ENCODE measurements at regions of chr5 and their contacts with region 1.

Region 1: GRCh38 chr5:37412515-37413277 is 33.6 kb downstream of the WDR70 start:
- DNase-seq: peak; percentile 74
- ATAC-seq: peak; percentile 96; the same call in 1 of the 2 replicates
- H3K4me3 ChIP-seq: no peak overlapping the region
- H3K27ac ChIP-seq: no peak overlapping the region
- H3K4me1 ChIP-seq: no peaks in the 10 kb centered on the region
- H3K27me3 ChIP-seq: no peaks in the 10 kb centered on the region
- CTCF ChIP-seq: peak; percentile 94

Region 2: GRCh38 chr5:37400501-37400900 is 12.2 kb before region 1 on chr5:
- CTCF ChIA-PET with region 1: interaction called, 4 read pairs
- POLR2A ChIA-PET with region 1: interaction called, 15 read pairs
- in situ Hi-C with region 1: no loop called
- intact Hi-C with region 1: no loop called
- DNase-seq: no peak
- ATAC-seq: peak; percentile 51; the same call in 1 of the 2 replicates
- H3K4me3 ChIP-seq: no peak overlapping the region
- H3K27ac ChIP-seq: no peak overlapping the region
- H3K4me1 ChIP-seq: no peaks in the 10 kb centered on the region
- H3K27me3 ChIP-seq: no peaks in the 10 kb centered on the region
- CTCF ChIP-seq: no peak

Region 3: DNA sequence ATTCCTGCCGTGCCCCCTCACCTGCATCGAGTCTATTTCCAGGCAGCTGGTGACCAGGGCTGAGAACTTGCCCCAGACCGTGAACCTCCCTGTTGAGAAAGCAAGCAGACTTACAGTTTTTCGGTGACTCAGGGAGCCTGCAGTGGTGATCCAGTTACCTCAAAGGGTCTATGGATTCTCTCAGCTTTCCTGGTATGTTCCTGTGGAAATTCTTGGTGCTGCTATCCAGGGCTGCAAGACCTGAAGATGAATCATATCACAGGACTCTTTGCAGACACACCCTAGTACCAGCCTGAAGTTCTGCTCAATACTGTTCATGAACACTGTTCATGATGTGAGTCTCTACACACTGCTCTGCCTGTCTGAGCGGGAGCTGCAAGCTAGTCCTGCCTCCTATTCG is 121.2 kb after region 1 on chr5:
- CTCF ChIA-PET with region 1: no interaction called
- POLR2A ChIA-PET with region 1: no interaction called
- in situ Hi-C with region 1: no loop called
- intact Hi-C with region 1: no loop called
- DNase-seq: no peak
- ATAC-seq: no peak
- H3K4me3 ChIP-seq: no peak overlapping the region
- H3K27ac ChIP-seq: no peak overlapping the region
- H3K4me1 ChIP-seq: no peaks in the 10 kb centered on the region
- H3K27me3 ChIP-seq: no peaks in the 10 kb centered on the region
- CTCF ChIP-seq: no peak

Region 4: GRCh38 chr5:37549419-37549818 is 136.7 kb after region 1 on chr5:
- CTCF ChIA-PET with region 1: no interaction called
- POLR2A ChIA-PET with region 1: no interaction called
- in situ Hi-C with region 1: no loop called
- intact Hi-C with region 1: loop called (anchors 10 kb)
- DNase-seq: no peak
- ATAC-seq: no peak
- H3K4me3 ChIP-seq: no peak overlapping the region
- H3K27ac ChIP-seq: no peak overlapping the region
- H3K4me1 ChIP-seq: no peaks in the 10 kb centered on the region
- H3K27me3 ChIP-seq: no peaks in the 10 kb centered on the region
- CTCF ChIP-seq: no peak

Region 5: GRCh38 chr5:37837414-37838032 is 424.8 kb after region 1 on chr5:
- CTCF ChIA-PET with region 1: interaction called, 4 read pairs
- POLR2A ChIA-PET with region 1: no interaction called
- in situ Hi-C with region 1: no loop called
- intact Hi-C with region 1: loop called (anchors 10 kb)
- DNase-seq: peak; percentile 38
- ATAC-seq: peak; percentile 79
- H3K4me3 ChIP-seq: peak overlapping the region; percentile 35 to 52
- H3K27ac ChIP-seq: no peak overlapping the region
- H3K4me1 ChIP-seq: peaks cover 13% of the 10 kb centered on the region
- H3K27me3 ChIP-seq: peaks cover 31% of the 10 kb centered on the region
- CTCF ChIP-seq: peak; percentile 92

Region 6: DNA sequence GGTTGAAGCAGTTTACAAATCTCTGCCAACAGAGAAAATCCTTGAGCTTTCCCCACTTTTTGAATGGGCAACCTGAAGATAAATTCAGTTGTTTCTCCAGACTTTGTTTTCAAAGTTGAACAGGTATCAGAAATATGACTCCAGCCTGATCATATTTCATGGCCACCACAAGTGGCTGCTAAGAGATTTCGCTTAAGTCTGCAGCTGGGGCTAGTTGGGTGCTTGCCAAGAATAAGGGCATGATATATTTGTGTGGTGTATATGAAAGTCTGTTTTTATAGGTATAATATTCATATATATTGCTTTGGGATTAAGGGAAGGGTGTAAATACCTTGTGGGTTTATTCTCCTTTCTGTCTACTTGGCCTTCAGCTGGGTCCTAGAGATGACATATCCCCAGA is 595.5 kb after region 1 on chr5:
- CTCF ChIA-PET with region 1: no interaction called
- POLR2A ChIA-PET with region 1: no interaction called
- in situ Hi-C with region 1: no loop called
- intact Hi-C with region 1: no loop called
- DNase-seq: no peak
- ATAC-seq: no peak
- H3K4me3 ChIP-seq: no peak overlapping the region
- H3K27ac ChIP-seq: no peak overlapping the region
- H3K4me1 ChIP-seq: no peaks in the 10 kb centered on the region
- H3K27me3 ChIP-seq: peaks cover 19% of the 10 kb centered on the region
- CTCF ChIP-seq: no peak

Region 7: DNA sequence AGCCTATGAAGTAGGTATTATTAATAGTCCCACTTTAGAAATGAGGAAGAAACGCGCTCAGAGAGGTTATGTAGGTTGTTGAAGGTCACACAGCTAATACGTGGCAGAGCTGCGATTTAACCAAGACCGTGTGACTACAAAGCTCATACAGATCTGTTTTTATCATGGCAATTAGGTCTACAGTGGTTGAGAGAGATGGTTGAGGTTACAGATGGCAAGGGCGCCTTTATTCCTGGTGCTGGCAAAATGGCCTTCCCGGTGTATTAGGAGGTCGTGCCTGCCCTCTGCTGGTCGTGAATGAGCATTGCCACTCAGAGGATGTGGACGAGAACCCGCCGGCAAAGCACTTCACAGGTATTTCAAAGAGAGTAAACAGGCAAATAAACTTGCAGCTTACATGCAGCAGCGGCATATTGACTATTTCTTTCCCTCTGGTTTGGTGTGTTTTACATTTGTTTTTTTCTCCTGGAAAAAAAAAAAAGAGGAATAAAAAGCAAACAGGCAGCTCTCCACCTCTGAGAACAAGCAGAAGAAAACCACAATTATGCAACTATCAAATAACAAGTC is 780.4 kb after region 1 on chr5:
- CTCF ChIA-PET with region 1: interaction called, 10 read pairs
- POLR2A ChIA-PET with region 1: no interaction called
- in situ Hi-C with region 1: no loop called
- intact Hi-C with region 1: loop called (anchors 5 kb)
- DNase-seq: peak; percentile 55
- ATAC-seq: peak; percentile 86
- H3K4me3 ChIP-seq: no peak overlapping the region
- H3K27ac ChIP-seq: no peak overlapping the region
- H3K4me1 ChIP-seq: no peaks in the 10 kb centered on the region
- H3K27me3 ChIP-seq: peaks cover 16% of the 10 kb centered on the region
- CTCF ChIP-seq: peak; percentile 89